ENCODE measurements at regions of chr1 and their contacts with region 1.

Region 1: GRCh38 chr1:18820791-18821641 is 38.4 kb downstream of the TAS1R2 start:
- ATAC-seq: peak; percentile 77 to 96 (median 90)
- H3K4me3 ChIP-seq: no peak overlapping the region
- H3K27ac ChIP-seq: no peak overlapping the region
- H3K4me1 ChIP-seq: peaks cover 0 to 13% of the 10 kb centered on the region in 2 donors

Region 2: DNA sequence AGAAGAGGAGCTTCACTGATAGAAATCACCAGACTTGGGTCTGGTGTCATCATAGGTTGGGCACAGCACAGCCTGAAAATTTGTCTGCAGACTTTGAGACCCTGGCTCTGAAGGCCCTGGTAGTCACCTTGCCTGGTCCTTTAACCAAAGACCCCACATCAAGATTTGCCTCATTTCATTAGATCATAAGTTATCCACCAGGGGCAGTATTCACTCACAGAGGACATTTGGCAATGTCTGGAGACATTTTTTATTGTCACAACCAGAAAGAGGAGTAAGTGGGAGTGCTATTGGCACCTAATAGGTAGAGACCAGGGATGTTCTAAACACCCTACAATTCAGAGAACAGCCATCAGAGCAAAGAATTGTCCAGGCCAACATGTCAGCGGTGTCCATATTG is 212.5 kb before region 1 on chr1:
- in situ Hi-C with region 1: loop called in 3 of 9 experiments (anchors 10 to 25 kb)
- ATAC-seq: no peak
- H3K4me3 ChIP-seq: no peak overlapping the region
- H3K27ac ChIP-seq: no peak overlapping the region
- H3K4me1 ChIP-seq: peaks cover 0 to 8% of the 10 kb centered on the region in 2 donors

Region 3: GRCh38 chr1:18618546-18619466 is 202.2 kb before region 1 on chr1:
- in situ Hi-C with region 1: loop called in 2 of 9 experiments (anchors 25 kb)
- ATAC-seq: no peak
- H3K4me3 ChIP-seq: no peak overlapping the region
- H3K27ac ChIP-seq: no peak overlapping the region
- H3K4me1 ChIP-seq: no peaks in the 10 kb centered on the region